Mammary epithelial cell (primary cell): ENCODE measurements at regions of chr4 and their contacts with region 1.

Region 1: GRCh38 chr4:92172203-92172602 is 131.6 kb upstream of the GRID2 start:
- DNase-seq: no peak
- H3K4me3 ChIP-seq: no peak overlapping the region
- H3K27ac ChIP-seq: no peak overlapping the region
- H3K4me1 ChIP-seq: no peaks in the 10 kb centered on the region
- H3K27me3 ChIP-seq: no peaks in the 10 kb centered on the region
- CTCF ChIP-seq: peak in 1 of 2 donors; percentile 49

Region 2: DNA sequence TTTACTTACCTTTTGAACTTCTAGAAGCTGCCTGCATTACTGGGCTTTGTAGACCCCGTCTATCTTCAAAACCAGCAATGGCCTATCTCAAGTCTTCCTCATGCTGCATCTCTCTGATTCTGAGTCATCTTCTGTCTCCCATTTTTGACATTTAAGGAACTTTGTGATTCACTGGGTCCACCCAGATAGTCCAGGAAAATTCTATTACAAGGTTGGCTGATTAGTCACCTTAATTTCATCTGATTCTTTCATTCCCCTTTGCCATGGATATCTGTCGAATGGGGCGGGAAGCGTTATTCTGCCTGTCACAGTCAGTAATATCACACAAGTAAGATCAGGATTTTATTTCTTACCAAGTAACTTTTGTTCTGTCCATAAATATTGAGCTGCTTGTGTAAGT is 1427.0 kb before region 1 on chr4:
- CTCF ChIA-PET with region 1: interaction called, 15 read pairs
- dilution Hi-C with region 1: no loop called
- in situ Hi-C with region 1: no loop called
- intact Hi-C with region 1: no loop called
- DNase-seq: peak; percentile 59
- H3K4me3 ChIP-seq: no peak overlapping the region
- H3K27ac ChIP-seq: no peak overlapping the region
- H3K4me1 ChIP-seq: no peaks in the 10 kb centered on the region
- H3K27me3 ChIP-seq: no peaks in the 10 kb centered on the region
- CTCF ChIP-seq: no peak

Region 3: GRCh38 chr4:92101737-92102172 is 70.4 kb before region 1 on chr4:
- CTCF ChIA-PET with region 1: no interaction called
- dilution Hi-C with region 1: loop called (anchors 5 kb)
- in situ Hi-C with region 1: no loop called
- intact Hi-C with region 1: no loop called
- DNase-seq: peak; percentile 27
- H3K4me3 ChIP-seq: no peak overlapping the region
- H3K27ac ChIP-seq: no peak overlapping the region
- H3K4me1 ChIP-seq: no peaks in the 10 kb centered on the region
- H3K27me3 ChIP-seq: no peaks in the 10 kb centered on the region
- CTCF ChIP-seq: no peak

Region 4: GRCh38 chr4:92299152-92299551 is 126.9 kb after region 1 on chr4:
- CTCF ChIA-PET with region 1: no interaction called
- dilution Hi-C with region 1: no loop called
- in situ Hi-C with region 1: no loop called
- intact Hi-C with region 1: loop called (anchors 1 kb)
- DNase-seq: peak; percentile 4
- H3K4me3 ChIP-seq: no peak overlapping the region
- H3K27ac ChIP-seq: no peak overlapping the region
- H3K4me1 ChIP-seq: no peaks in the 10 kb centered on the region
- H3K27me3 ChIP-seq: peaks cover 18% of the 10 kb centered on the region
- CTCF ChIP-seq: peak; percentile 28 to 44

Region 5: GRCh38 chr4:93764639-93765246 is 1592.5 kb after region 1 on chr4:
- CTCF ChIA-PET with region 1: no interaction called
- dilution Hi-C with region 1: no loop called
- in situ Hi-C with region 1: no loop called
- intact Hi-C with region 1: loop called (anchors 5 kb)
- DNase-seq: peak; percentile 26
- H3K4me3 ChIP-seq: no peak overlapping the region
- H3K27ac ChIP-seq: no peak overlapping the region
- H3K4me1 ChIP-seq: no peaks in the 10 kb centered on the region
- H3K27me3 ChIP-seq: peaks cover 2% of the 10 kb centered on the region
- CTCF ChIP-seq: peak; percentile 72 to 81